ENCODE measurements at regions of chr18 and their contacts with region 1.

Region 1: DNA sequence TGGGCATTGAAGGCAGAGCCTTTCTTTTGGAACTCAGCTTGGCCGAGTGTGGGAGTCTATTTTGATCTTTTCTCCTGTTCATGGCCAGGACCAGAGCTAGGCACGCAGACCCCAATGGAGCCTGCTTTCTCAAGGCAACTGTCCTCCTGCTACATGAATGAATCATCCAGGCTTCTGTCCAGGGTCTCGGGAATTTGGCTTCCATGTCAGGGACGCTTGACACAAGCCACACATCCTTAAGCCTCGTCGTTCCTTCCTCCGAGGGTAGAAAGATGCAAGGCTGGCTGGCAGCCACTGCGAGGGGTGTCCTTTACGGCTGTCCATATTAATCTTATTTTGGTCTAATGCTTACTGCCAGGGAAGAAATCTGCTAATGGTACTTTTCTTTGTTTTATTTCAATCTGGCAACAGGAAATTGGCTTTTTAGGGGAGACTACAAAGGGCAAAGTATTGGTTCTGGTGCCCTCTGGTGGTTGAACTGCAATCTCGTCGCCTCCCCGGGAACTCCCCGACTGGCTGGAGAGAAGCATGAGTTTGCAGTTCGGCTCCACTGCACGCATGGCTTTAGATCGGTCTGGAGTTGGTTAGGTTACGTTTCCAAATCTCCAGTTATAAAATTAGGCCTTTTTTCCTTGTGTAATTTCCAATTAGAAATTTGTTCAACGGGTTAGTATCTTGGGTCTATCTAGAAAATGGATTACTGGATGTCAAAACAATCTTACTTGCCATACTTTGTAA is 135.2 kb downstream of the ALPK2 start:
- DNase-seq: peak; percentile 80 to 94
- H3K4me3 ChIP-seq: no peak overlapping the region
- H3K27ac ChIP-seq: peak overlapping the region in 1 of 5 donors; percentile 50
- H3K4me1 ChIP-seq: peaks cover 0 to 19% (median 9%) of the 10 kb centered on the region in 4 donors
- H3K27me3 ChIP-seq: peaks cover 0 to 7% (median 0%) of the 10 kb centered on the region in 3 donors
- CTCF ChIP-seq: peak in 5 of 7 experiments; percentile 59 to 85 (median 78)
- EP300 ChIP-seq: no peak
- POLR2A ChIP-seq: no peak

Region 2: GRCh38 chr18:58402247-58402646 is 91.4 kb before region 1 on chr18:
- intact Hi-C with region 1: loop called (anchors 10 kb)
- DNase-seq: peak in 1 of 2 donors; percentile 77
- H3K4me3 ChIP-seq: no peak overlapping the region
- H3K27ac ChIP-seq: no peak overlapping the region
- H3K4me1 ChIP-seq: peaks cover 0 to 17% (median 11%) of the 10 kb centered on the region in 4 donors
- H3K27me3 ChIP-seq: no peaks in the 10 kb centered on the region
- CTCF ChIP-seq: no peak
- EP300 ChIP-seq: no peak
- POLR2A ChIP-seq: no peak